ENCODE measurements at regions of chr3 and their contacts with region 1.

Region 1: DNA sequence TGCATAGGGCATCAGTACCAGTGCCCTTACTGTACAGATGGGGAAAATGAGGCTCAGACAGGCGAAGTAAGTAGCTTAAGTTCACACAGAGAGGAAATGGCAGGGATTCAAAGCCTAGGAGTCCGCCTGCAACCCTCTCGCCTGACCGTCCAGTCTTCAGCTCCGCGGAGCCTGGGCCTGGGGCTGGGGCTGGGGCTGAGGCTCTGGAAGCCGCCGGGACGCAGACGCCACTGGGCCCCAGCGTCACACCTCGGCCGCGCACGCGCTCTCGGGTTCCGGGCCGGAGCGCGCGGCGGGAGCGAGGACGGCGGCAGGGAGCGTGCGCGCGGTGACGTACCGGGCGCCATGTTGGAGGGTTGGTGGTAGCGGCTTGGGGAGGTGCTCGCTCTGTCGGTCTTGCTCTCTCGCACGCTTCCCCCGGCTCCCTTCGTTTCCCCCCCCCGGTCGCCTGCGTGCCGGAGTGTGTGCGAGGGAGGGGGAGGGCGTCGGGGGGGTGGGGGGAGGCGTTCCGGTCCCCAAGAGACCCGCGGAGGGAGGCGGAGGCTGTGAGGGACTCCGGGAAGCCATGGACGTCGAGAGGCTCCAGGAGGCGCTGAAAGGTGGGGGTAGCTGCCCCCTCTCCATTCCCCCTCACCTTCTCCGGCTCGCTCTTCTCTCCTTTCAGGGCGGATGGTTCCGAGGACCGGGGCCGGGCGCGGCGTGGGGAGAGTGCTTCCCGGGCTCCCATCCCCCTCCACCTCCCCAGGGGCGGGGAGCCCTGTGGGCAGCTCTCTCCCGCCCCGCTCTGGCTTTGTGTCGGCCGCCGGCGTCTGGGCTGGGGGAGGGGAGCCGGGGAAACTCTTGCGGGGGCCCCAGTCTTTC is at the start of gene PPP4R2:
- DNase-seq: peak; percentile 71 to 81
- ATAC-seq: peak; percentile 90
- H3K4me3 ChIP-seq: peak within 1 kb of the TSS; percentile 91 to 94 (median 93)
- H3K27ac ChIP-seq: peak within 1 kb of the TSS; percentile 90 to 99 (median 98)
- H3K4me1 ChIP-seq: peaks cover 38 to 45% of the 10 kb centered on the region in 2 donors
- H3K27me3 ChIP-seq: no peaks in the 10 kb centered on the region
- CTCF ChIP-seq: no peak
- POLR2A ChIP-seq: peak; percentile 86 to 88
- total RNA-seq, gene PPP4R2: 31.0 to 60.5 (median 47.0) TPM

Region 2: DNA sequence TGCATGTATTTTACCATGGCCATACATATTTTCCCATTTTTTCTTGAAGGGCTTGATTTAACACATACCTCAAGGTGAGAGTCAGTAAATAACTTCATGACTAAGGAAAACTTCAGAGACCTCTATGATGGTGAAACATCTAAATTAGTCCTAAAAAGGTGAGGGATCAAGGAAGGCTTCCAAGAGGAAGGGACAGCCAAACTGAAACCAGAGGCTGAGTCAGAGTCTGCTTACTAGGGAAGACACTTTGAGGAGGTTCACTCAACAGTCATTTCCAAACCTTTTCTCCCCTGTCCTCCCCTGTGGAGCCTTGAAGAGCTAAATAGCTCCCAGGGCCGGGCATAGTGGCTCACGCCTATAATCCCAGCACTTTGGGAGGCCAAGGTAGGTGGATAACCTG is 355.0 kb before region 1 on chr3:
- in situ Hi-C with region 1: no loop called
- intact Hi-C with region 1: no loop called
- DNase-seq: no peak
- ATAC-seq: no peak
- H3K4me3 ChIP-seq: no peak overlapping the region
- H3K27ac ChIP-seq: no peak overlapping the region
- H3K4me1 ChIP-seq: no peaks in the 10 kb centered on the region
- H3K27me3 ChIP-seq: peaks cover 0 to 3% (median 0%) of the 10 kb centered on the region in 3 donors
- CTCF ChIP-seq: no peak
- POLR2A ChIP-seq: no peak

Region 3: DNA sequence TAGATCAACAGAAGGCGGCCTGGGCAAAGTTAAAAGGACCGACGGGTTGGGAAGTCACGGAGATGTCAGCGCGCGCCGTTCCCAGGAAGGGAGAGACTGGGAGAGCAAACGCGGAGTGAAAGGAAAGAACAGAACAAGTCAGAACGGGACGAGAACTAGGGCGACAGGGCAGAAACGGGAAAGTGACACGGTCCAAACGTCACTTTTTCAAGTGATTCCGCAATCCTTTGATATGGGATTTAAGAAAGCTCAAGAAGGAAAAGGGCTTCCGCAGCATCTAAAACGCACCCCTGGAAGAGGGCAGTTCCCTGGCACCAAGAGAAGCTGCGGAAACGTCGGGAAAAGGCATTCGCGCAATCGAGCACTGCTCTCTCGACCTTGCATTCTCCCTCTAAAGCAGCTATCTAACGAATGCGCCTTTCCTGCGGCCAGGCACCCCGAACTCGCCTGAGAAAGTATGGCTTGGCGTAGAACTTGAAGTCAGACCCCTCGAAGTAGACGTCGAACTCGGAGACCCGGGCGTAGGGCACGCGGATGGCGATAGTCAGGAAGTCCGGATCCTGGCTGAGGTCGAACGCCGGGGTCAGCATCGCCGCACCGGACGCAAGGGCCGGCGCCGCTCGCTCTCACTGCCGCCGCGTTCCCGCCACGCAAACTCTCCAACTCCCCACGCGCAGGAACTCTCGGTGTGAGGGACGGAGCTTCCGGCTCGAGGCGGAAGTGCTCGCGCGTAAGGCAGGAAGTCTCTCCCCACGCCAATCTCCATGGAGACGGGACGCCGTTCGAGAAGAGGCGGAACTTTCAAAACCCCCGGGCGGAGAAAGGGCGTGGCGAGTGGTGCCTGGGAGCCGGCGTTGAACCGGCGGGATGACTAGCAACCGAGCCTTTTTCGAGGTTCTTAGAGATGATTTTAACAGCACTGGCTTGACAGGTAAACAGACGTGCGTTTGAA is 148.7 kb before region 1 on chr3 and contains the start of gene SHQ1:
- in situ Hi-C with region 1: no loop called
- intact Hi-C with region 1: loop called (anchors 1 kb)
- DNase-seq: peak; percentile 92 to 93
- ATAC-seq: peak; percentile 99
- H3K4me3 ChIP-seq: peak within 1 kb of the TSS; percentile 81 to 100 (median 91)
- H3K27ac ChIP-seq: peak within 1 kb of the TSS; percentile 79 to 91 (median 82)
- H3K4me1 ChIP-seq: peaks cover 23 to 35% of the 10 kb centered on the region in 2 donors
- H3K27me3 ChIP-seq: no peaks in the 10 kb centered on the region
- CTCF ChIP-seq: no peak
- POLR2A ChIP-seq: peak; percentile 55 to 61
- total RNA-seq, gene SHQ1: 9.2 to 15.0 (median 12.6) TPM

Region 4: GRCh38 chr3:72887705-72888545 is 108.8 kb before region 1 on chr3 and contains the start of gene GXYLT2:
- in situ Hi-C with region 1: no loop called
- intact Hi-C with region 1: loop called (anchors 5 kb)
- DNase-seq: peak in 1 of 2 donors; percentile 26
- ATAC-seq: peak; percentile 61 to 74
- H3K4me3 ChIP-seq: peak within 1 kb of the TSS; percentile 48 to 63 (median 50)
- H3K27ac ChIP-seq: peak within 1 kb of the TSS in 2 of 4 donors; percentile 27 to 31
- H3K4me1 ChIP-seq: peaks cover 14% of the 10 kb centered on the region in 2 donors
- H3K27me3 ChIP-seq: no peaks in the 10 kb centered on the region
- CTCF ChIP-seq: peak in 1 of 5 experiments; percentile 18
- POLR2A ChIP-seq: no peak
- total RNA-seq, gene GXYLT2: 0.31 to 0.94 (median 0.38) TPM in 3 of 4 donors, not detected in the other

Region 5: DNA sequence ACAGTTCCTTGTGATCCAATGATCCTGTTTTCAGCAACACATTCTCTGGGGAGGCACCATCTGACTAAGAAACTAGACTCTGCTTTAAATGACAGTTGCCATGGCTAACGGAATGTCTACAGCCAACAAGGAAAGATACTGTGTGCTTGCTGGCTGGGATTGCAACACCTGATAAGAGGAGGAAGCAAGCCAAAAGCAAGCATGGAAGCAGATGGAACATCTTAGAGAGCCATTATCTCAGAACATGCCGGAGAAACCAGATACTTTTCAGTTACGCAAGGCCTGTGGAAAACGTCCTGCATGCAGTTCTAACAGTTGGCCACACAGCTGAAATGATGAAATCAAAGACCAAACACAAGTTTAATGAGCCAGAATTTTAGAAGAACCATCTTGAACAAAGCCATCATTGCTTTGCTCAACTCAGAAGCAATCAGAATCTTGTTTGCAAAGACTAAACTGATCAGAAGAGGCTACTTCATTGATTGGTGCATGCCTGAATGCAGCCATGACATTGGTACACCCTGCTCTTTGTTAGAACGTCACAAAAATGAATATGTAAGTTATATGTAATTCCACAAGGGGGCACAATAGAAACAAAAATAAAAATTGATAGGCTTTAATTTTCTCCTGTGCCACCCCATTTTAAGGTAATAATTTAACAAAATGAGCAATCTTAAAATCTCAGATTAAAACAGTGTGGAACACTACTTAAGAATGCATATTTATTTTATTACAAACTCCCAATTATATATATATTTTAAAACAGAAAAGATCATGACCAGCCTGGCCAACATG is 58.0 kb before region 1 on chr3:
- in situ Hi-C with region 1: no loop called
- intact Hi-C with region 1: loop called (anchors 1 kb)
- DNase-seq: peak; percentile 79
- ATAC-seq: peak; percentile 99 to 100
- H3K4me3 ChIP-seq: no peak overlapping the region
- H3K27ac ChIP-seq: peak overlapping the region; percentile 35 to 73 (median 54)
- H3K4me1 ChIP-seq: peaks cover 10 to 11% of the 10 kb centered on the region in 2 donors
- H3K27me3 ChIP-seq: no peaks in the 10 kb centered on the region
- CTCF ChIP-seq: peak; percentile 59 to 95 (median 71)
- POLR2A ChIP-seq: no peak